CD4-positive, alpha-beta T cell (primary cell): ENCODE measurements at regions of chr18 and their contacts with region 1.

Region 1: GRCh38 chr18:62522504-62523254 is at the start of gene ZCCHC2:
- DNase-seq: peak; percentile 95 to 100 (median 98)
- ATAC-seq: peak; percentile 74
- H3K4me3 ChIP-seq: peak within 1 kb of the TSS; percentile 92
- H3K4me3 Mint-ChIP-seq: peak within 1 kb of the TSS; percentile 98
- H3K27ac ChIP-seq: peak within 1 kb of the TSS; percentile 62 to 75
- H3K27ac Mint-ChIP-seq: peak within 1 kb of the TSS; percentile 93
- H3K4me1 ChIP-seq: peaks cover 25% of the 10 kb centered on the region
- H3K4me1 Mint-ChIP-seq: peaks cover 40% of the 10 kb centered on the region
- H3K27me3 ChIP-seq: no peaks in the 10 kb centered on the region
- H3K27me3 Mint-ChIP-seq: no peaks in the 10 kb centered on the region
- CTCF ChIP-seq: no peak
- total RNA-seq, gene ZCCHC2: 85.0 to 85.4 TPM

Region 2: GRCh38 chr18:62102221-62102620 is 420.5 kb before region 1 on chr18:
- CTCF ChIA-PET with region 1: no interaction called
- POLR2A ChIA-PET with region 1: no interaction called
- intact Hi-C with region 1: no loop called
- DNase-seq: no peak
- ATAC-seq: no peak
- H3K4me3 ChIP-seq: no peak overlapping the region
- H3K4me3 Mint-ChIP-seq: no peak overlapping the region
- H3K27ac ChIP-seq: no peak overlapping the region
- H3K27ac Mint-ChIP-seq: no peak overlapping the region
- H3K4me1 ChIP-seq: no peaks in the 10 kb centered on the region
- H3K4me1 Mint-ChIP-seq: peaks cover 8% of the 10 kb centered on the region
- H3K27me3 ChIP-seq: no peaks in the 10 kb centered on the region
- H3K27me3 Mint-ChIP-seq: no peaks in the 10 kb centered on the region
- CTCF ChIP-seq: no peak

Region 3: DNA sequence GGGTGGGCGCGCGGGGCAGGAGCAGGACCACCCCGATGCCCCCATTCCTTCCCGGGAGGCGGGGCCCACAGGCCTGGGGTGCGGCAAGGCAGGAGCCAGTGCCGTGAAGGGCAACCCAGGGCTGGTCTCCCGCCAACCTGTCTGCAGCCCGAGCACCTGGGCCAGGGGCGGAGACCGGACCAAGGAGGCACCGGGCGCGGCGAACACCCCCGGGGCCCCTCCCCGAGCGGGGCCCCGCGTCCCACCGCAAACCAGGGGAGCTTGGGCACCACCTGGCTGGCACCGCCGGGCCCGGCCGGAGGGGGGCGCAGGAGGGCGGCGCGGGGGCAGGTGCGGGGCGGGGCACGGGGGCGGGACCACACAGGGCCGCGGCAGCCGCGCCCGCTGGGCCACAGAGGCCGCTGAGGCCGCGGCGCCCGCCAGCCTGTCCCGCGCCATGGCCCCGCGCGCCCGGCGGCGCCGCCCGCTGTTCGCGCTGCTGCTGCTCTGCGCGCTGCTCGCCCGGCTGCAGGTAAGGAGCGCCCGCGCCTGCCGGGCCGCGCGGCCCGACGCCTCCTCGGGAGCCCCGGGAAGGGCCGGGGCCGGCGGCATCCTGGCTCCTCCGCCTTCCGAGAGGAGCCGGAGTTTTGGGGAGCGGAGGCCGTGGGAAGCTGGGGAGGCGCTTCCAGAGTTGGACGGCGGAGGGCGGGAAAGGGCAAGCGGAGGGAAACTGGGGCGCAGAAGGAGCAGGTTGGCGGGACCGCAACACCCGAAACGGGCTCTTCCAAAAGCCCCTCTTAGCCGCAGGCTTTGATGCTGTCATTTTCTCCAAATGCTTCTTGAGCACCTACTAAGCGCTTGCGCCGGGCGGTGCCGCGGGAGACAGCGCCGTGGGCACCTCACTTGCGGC is 197.5 kb before region 1 on chr18 and contains the start of gene TNFRSF11A:
- CTCF ChIA-PET with region 1: interaction called, 3 read pairs
- POLR2A ChIA-PET with region 1: no interaction called
- intact Hi-C with region 1: loop called (anchors 2 to 5 kb)
- DNase-seq: peak; percentile 30 to 80 (median 56)
- ATAC-seq: peak; percentile 87
- H3K4me3 ChIP-seq: peak within 1 kb of the TSS; percentile 61
- H3K4me3 Mint-ChIP-seq: peak within 1 kb of the TSS; percentile 88
- H3K27ac ChIP-seq: no peak within 1 kb of the TSS
- H3K27ac Mint-ChIP-seq: no peak within 1 kb of the TSS
- H3K4me1 ChIP-seq: peaks cover 35% of the 10 kb centered on the region
- H3K4me1 Mint-ChIP-seq: peaks cover 40% of the 10 kb centered on the region
- H3K27me3 ChIP-seq: peaks cover 36 to 46% of the 10 kb centered on the region in 2 experiments
- H3K27me3 Mint-ChIP-seq: peaks cover 78% of the 10 kb centered on the region
- CTCF ChIP-seq: no peak
- total RNA-seq, gene TNFRSF11A: 1.7 TPM

Region 4: DNA sequence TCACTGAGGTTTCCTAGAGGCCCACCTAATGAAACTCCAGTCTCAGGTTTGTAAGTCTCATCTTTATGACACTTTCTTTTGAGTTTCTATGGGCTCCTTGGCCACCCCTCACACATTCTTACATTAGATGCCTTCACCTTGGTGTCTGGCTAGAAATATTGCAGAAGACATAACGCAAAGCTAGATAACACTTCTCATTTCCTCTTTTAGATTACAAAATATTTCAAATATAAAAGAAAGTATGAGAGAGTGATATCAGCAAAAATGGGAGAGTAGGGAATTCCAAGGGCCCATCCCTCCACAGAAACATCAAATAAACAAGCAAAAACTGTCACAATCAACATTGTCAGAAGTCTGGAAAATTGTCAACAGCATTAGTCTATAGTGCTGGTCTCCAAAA is 43.1 kb before region 1 on chr18:
- CTCF ChIA-PET with region 1: no interaction called
- POLR2A ChIA-PET with region 1: no interaction called
- intact Hi-C with region 1: no loop called
- DNase-seq: no peak
- ATAC-seq: no peak
- H3K4me3 ChIP-seq: no peak overlapping the region
- H3K4me3 Mint-ChIP-seq: no peak overlapping the region
- H3K27ac ChIP-seq: no peak overlapping the region
- H3K27ac Mint-ChIP-seq: no peak overlapping the region
- H3K4me1 ChIP-seq: no peaks in the 10 kb centered on the region
- H3K4me1 Mint-ChIP-seq: no peaks in the 10 kb centered on the region
- H3K27me3 ChIP-seq: peaks cover 6 to 22% of the 10 kb centered on the region in 2 experiments
- H3K27me3 Mint-ChIP-seq: peaks cover 56% of the 10 kb centered on the region
- CTCF ChIP-seq: no peak

Region 5: GRCh38 chr18:62505669-62506494 is 16.8 kb before region 1 on chr18:
- CTCF ChIA-PET with region 1: no interaction called
- POLR2A ChIA-PET with region 1: interaction called, 79 read pairs
- intact Hi-C with region 1: loop called (anchors 1 to 2 kb)
- DNase-seq: peak in 10 of 14 experiments; percentile 2 to 74 (median 35)
- ATAC-seq: peak; percentile 68
- H3K4me3 ChIP-seq: peak overlapping the region; percentile 57
- H3K4me3 Mint-ChIP-seq: peak overlapping the region; percentile 92
- H3K27ac ChIP-seq: peak overlapping the region; percentile 51 to 84
- H3K27ac Mint-ChIP-seq: peak overlapping the region; percentile 96
- H3K4me1 ChIP-seq: peaks cover 16% of the 10 kb centered on the region
- H3K4me1 Mint-ChIP-seq: peaks cover 20% of the 10 kb centered on the region
- H3K27me3 ChIP-seq: no peaks in the 10 kb centered on the region
- H3K27me3 Mint-ChIP-seq: no peaks in the 10 kb centered on the region
- CTCF ChIP-seq: no peak

Region 6: DNA sequence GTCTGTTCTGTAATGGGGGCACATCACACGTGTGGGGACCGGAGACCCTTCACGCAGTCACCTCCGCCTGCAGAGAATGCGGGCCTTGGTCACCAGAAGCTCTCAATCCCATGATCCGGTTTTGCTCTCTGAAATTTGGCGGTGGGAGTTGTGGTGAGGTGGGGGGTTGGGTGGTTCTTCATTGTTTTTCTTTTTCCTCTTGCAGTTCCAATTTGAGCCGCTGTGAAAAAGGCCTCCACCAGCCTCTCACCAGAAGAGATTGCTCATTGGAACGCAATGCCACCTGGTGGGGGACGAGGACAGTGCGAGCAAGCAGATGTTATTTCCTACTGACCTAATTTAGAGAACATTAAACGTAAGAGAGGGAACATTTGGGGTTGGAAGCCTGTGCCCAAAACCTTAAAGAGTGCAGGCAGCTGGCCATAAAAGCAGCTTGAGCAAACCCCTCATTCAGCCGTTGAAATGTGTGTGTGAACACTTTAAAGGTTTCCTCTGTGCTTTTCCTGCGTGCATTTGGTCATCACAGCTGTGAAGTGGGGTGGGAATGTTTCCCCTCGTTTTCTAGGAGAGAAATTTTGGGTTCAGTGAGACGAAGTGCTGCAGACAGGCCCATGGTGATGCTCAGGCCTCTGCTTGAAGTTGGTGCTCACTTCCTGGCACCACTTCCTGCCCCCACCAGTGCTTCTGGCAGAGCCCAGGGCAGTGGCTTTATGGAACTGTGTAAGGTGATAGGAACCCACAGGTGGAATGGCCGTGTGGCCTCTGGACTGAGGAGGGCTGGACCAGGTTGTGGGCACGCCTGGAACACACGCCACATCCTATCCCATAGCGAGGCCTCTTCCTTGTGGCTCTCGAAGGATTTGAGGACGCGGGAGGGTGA is 61.8 kb after region 1 on chr18:
- CTCF ChIA-PET with region 1: interaction called, 5 read pairs
- POLR2A ChIA-PET with region 1: interaction called, 24 read pairs
- intact Hi-C with region 1: loop called (anchors 2 to 5 kb)
- DNase-seq: peak; percentile 69 to 92 (median 78)
- ATAC-seq: peak; percentile 97
- H3K4me3 ChIP-seq: no peak overlapping the region
- H3K4me3 Mint-ChIP-seq: peak overlapping the region; percentile 16
- H3K27ac ChIP-seq: no peak overlapping the region
- H3K27ac Mint-ChIP-seq: peak overlapping the region; percentile 32
- H3K4me1 ChIP-seq: peaks cover 28% of the 10 kb centered on the region
- H3K4me1 Mint-ChIP-seq: peaks cover 33% of the 10 kb centered on the region
- H3K27me3 ChIP-seq: no peaks in the 10 kb centered on the region
- H3K27me3 Mint-ChIP-seq: no peaks in the 10 kb centered on the region
- CTCF ChIP-seq: peak; percentile 98

Region 7: GRCh38 chr18:63367053-63367953 is 844.6 kb after region 1 on chr18 and contains the start of gene KDSR:
- CTCF ChIA-PET with region 1: no interaction called
- POLR2A ChIA-PET with region 1: interaction called, 8 read pairs
- intact Hi-C with region 1: loop called in 1 of 2 experiments (anchors 5 kb)
- DNase-seq: peak; percentile 63 to 91 (median 77)
- ATAC-seq: peak; percentile 80
- H3K4me3 ChIP-seq: peak within 1 kb of the TSS; percentile 94
- H3K4me3 Mint-ChIP-seq: peak within 1 kb of the TSS; percentile 94
- H3K27ac ChIP-seq: peak within 1 kb of the TSS; percentile 65 to 72
- H3K27ac Mint-ChIP-seq: peak within 1 kb of the TSS; percentile 91
- H3K4me1 ChIP-seq: peaks cover 33% of the 10 kb centered on the region
- H3K4me1 Mint-ChIP-seq: peaks cover 56% of the 10 kb centered on the region
- H3K27me3 ChIP-seq: no peaks in the 10 kb centered on the region
- H3K27me3 Mint-ChIP-seq: no peaks in the 10 kb centered on the region
- CTCF ChIP-seq: no peak
- total RNA-seq, gene KDSR: 21.1 to 23.5 TPM